Activated T-helper 1 cell treated with anti-CD3 and anti-CD28 coated beads, Interleukin-12 subunit alpha, Interleukin-12 subunit beta, Interleukin-2, Interleukin-4 antibody, amounts not matched to agents 30 ng/mL and 10 ng/mL and 1 ng/mL, durations not matched to agents 14 hours and 24 hours and 36 hours (primary cell): ENCODE measurements at regions of chr17 and their contacts with region 1.

Region 1: DNA sequence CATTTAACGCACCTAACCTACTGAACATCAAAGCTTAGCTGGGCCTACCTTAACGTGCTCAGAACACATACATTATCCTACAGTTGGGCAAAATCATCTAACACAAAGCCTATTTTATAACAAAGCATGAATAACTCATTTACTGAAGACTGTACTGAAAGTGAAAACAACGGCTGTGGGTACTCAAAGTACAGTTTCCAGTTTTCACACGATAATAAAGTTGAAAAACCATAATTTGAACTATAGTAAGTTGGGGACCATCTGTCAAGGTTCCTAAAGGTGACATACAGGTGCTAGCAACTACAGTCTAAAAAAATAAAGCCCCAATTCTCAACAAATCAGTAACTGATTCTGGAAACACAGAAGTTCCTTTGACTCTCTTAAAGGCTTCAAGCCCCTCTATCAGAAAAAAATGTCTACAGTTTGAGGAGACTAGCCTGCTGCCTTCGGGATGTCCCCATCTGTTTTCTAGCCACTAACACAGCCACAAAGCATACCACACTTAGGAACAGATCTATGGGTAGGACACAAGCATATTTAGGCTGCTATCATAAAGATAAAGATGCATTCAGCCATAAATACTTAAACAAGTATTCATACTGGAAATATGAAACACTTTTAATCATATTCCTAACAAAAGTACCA is 71.3 kb downstream of the KANSL1 start:
- DNase-seq: no peak
- H3K4me3 Mint-ChIP-seq: peak overlapping the region; percentile 16
- H3K27ac Mint-ChIP-seq: peak overlapping the region; percentile 41
- H3K4me1 Mint-ChIP-seq: peaks cover 67% of the 10 kb centered on the region
- H3K27me3 Mint-ChIP-seq: no peaks in the 10 kb centered on the region

Region 2: GRCh38 chr17:46044286-46044928 is 77.6 kb before region 1 on chr17:
- intact Hi-C with region 1: no loop called
- DNase-seq: peak; percentile 12
- H3K4me3 Mint-ChIP-seq: no peak overlapping the region
- H3K27ac Mint-ChIP-seq: peak overlapping the region; percentile 2
- H3K4me1 Mint-ChIP-seq: peaks cover 30% of the 10 kb centered on the region
- H3K27me3 Mint-ChIP-seq: no peaks in the 10 kb centered on the region

Region 3: GRCh38 chr17:46089389-46089965 is 32.5 kb before region 1 on chr17:
- intact Hi-C with region 1: loop called (anchors 5 kb)
- DNase-seq: no peak
- H3K4me3 Mint-ChIP-seq: no peak overlapping the region
- H3K27ac Mint-ChIP-seq: peak overlapping the region; percentile 82
- H3K4me1 Mint-ChIP-seq: peaks cover 39% of the 10 kb centered on the region
- H3K27me3 Mint-ChIP-seq: no peaks in the 10 kb centered on the region

Region 4: DNA sequence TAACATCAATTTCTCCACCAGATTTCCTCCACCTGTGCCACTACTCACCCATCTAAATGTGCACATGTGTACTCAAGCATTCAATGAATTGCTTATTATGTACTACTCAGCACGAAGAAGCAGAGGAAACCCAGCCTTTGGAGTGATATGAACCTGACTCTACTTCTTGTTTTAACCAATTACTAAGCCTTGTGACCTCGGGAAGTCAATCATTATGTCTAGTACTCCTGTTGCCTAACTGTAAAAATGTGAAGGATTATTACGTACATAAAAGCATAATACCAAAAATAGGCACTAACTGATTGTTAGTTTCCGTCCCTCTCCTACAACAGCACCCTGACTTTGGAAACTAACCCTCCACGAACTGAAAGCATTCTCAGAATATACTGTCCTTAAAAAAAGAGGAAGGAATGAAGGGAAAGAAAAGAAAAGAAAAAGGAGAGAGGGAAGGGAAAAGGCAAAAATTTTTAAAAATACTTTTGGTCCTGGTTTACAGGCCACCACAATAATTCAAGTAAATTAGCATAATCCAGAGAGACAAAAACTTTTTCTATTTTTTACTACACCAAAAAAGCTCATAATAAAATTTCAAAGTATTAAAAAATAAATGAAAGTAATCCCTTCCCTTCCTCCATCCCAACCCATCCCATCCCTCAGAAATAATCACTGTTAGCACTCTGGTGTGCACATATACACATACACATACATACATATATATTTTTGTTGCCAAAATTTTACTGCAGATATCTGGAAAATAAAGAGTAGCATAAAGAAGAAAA is 17.7 kb after region 1 on chr17:
- intact Hi-C with region 1: loop called (anchors 2 kb)
- DNase-seq: no peak
- H3K4me3 Mint-ChIP-seq: no peak overlapping the region
- H3K27ac Mint-ChIP-seq: no peak overlapping the region
- H3K4me1 Mint-ChIP-seq: peaks cover 91% of the 10 kb centered on the region
- H3K27me3 Mint-ChIP-seq: no peaks in the 10 kb centered on the region

Region 5: GRCh38 chr17:46154151-46154816 is 32.3 kb after region 1 on chr17:
- intact Hi-C with region 1: loop called (anchors 1 kb)
- DNase-seq: peak; percentile 27
- H3K4me3 Mint-ChIP-seq: peak overlapping the region; percentile 76
- H3K27ac Mint-ChIP-seq: peak overlapping the region; percentile 82
- H3K4me1 Mint-ChIP-seq: peaks cover 82% of the 10 kb centered on the region
- H3K27me3 Mint-ChIP-seq: no peaks in the 10 kb centered on the region